ENCODE measurements at regions of chr9 and their contacts with region 1.

Region 1: GRCh38 chr9:86354011-86354817 is at the start of gene TUT7:
- DNase-seq: peak; percentile 65
- ATAC-seq: peak; percentile 83
- H3K4me3 ChIP-seq: peak within 1 kb of the TSS; percentile 99
- H3K27ac ChIP-seq: peak within 1 kb of the TSS; percentile 94
- H3K4me1 ChIP-seq: no peaks in the 10 kb centered on the region; the same call in 1 of the 2 replicates
- H3K27me3 ChIP-seq: no peaks in the 10 kb centered on the region
- CTCF ChIP-seq: no peak
- EP300 ChIP-seq: no peak
- POLR2A ChIP-seq: peak; percentile 88
- RAD21 ChIP-seq: no peak
- polyA plus RNA-seq, gene TUT7: 10.0 to 10.3 TPM

Region 2: GRCh38 chr9:86282077-86282978 is 71.9 kb before region 1 on chr9 and contains the start of gene ISCA1:
- CTCF ChIA-PET with region 1: interaction called, 3 read pairs
- POLR2A ChIA-PET with region 1: interaction called, 5 read pairs
- RAD21 ChIA-PET with region 1: no interaction called
- SMC1A ChIA-PET with region 1: interaction called, 5 read pairs
- in situ Hi-C with region 1: no loop called
- intact Hi-C with region 1: loop called (anchors 2 kb)
- DNase-seq: peak; percentile 50
- ATAC-seq: peak; percentile 92
- H3K4me3 ChIP-seq: peak within 1 kb of the TSS; percentile 83
- H3K27ac ChIP-seq: peak within 1 kb of the TSS; percentile 74
- H3K4me1 ChIP-seq: peaks cover 5% of the 10 kb centered on the region; the same call in 1 of the 2 replicates
- H3K27me3 ChIP-seq: no peaks in the 10 kb centered on the region
- CTCF ChIP-seq: no peak
- EP300 ChIP-seq: no peak
- POLR2A ChIP-seq: peak; percentile 84
- RAD21 ChIP-seq: no peak
- polyA plus RNA-seq, gene ISCA1: 8.9 to 10.9 TPM